ENCODE measurements at regions of chr12 and their contacts with region 1.

Region 1: DNA sequence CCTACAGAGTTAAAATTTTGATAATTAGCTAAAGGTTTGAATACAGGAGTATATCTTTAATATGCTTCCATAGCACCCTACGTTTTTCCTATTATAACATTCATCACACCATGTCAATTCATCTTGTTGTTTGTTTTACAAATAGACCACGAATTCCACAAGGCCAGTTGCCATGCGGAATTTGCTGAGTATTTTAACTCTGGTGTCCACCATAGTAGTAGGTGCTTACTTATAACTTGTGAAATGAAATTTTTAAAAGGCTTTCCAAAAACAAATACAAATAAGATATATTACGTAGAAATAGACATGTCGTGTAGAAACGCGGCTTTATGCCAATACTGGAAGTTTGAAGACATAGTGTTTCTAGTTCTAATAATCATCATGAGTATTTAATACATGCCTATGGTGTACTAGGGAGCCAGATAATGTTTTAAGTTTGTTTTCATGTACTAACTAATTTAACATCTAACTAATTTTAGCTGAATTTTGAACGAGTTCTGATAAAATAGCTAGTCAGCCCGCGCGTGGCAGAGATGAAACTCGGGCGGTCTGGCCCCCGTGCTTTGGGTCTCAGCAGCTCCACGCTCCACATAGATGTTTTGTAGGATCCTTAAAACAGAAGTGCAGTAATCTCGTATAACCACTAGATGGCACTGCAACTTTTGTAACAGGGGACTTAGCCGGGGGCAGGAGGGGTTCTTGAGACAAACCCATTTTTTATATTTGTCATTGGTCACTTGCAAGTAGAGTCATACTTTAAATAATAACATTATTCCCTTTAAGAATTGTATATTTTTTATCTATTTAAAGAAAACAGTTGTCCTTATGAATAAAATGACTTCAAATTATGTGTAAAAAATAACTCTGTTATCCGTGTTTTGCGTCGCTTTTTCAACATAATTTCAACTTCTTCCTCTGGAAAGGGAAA is 10.2 kb downstream of the CD69 start:
- DNase-seq: no peak
- ATAC-seq: peak; percentile 90
- H3K4me3 ChIP-seq: peak overlapping the region in 1 of 2 experiments; percentile 24; a peak in 1 of 4 replicates
- H3K27ac ChIP-seq: no peak overlapping the region
- H3K4me1 ChIP-seq: no peaks in the 10 kb centered on the region; the same call in 1 of the 2 replicates
- H3K27me3 ChIP-seq: no peaks in the 10 kb centered on the region
- CTCF ChIP-seq: peak; percentile 75

Region 2: DNA sequence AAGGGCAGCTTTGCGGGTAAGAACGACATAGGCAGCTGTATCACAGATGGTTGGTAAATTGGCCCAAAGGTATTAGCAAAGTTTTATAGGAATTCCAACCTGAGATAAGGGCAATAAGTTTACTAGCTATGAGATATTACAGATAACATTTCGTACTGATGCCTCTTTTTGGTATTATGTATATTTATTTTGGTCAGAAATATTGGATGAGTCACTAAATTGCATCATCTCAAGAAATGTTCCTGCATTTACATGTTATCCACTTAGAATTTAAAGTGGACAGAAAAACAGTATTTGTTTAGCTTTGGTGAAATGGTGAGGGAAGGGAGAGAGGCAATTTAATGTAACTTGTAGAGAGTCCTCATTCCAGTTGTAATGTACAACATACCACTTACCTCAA is 477.3 kb before region 1 on chr12:
- CTCF ChIA-PET with region 1: no interaction called
- POLR2A ChIA-PET with region 1: no interaction called
- in situ Hi-C with region 1: no loop called
- intact Hi-C with region 1: no loop called
- DNase-seq: no peak
- ATAC-seq: no peak
- H3K4me3 ChIP-seq: no peak overlapping the region
- H3K27ac ChIP-seq: no peak overlapping the region
- H3K4me1 ChIP-seq: no peaks in the 10 kb centered on the region
- H3K27me3 ChIP-seq: no peaks in the 10 kb centered on the region; the same call in 1 of the 2 replicates
- CTCF ChIP-seq: no peak

Region 3: GRCh38 chr12:9642606-9643265 is 107.8 kb before region 1 on chr12:
- CTCF ChIA-PET with region 1: no interaction called
- POLR2A ChIA-PET with region 1: no interaction called
- in situ Hi-C with region 1: no loop called
- intact Hi-C with region 1: no loop called
- DNase-seq: no peak
- ATAC-seq: no peak
- H3K4me3 ChIP-seq: no peak overlapping the region
- H3K27ac ChIP-seq: no peak overlapping the region
- H3K4me1 ChIP-seq: peaks cover 3% of the 10 kb centered on the region; the same call in 1 of the 2 replicates
- H3K27me3 ChIP-seq: no peaks in the 10 kb centered on the region
- CTCF ChIP-seq: no peak

Region 4: DNA sequence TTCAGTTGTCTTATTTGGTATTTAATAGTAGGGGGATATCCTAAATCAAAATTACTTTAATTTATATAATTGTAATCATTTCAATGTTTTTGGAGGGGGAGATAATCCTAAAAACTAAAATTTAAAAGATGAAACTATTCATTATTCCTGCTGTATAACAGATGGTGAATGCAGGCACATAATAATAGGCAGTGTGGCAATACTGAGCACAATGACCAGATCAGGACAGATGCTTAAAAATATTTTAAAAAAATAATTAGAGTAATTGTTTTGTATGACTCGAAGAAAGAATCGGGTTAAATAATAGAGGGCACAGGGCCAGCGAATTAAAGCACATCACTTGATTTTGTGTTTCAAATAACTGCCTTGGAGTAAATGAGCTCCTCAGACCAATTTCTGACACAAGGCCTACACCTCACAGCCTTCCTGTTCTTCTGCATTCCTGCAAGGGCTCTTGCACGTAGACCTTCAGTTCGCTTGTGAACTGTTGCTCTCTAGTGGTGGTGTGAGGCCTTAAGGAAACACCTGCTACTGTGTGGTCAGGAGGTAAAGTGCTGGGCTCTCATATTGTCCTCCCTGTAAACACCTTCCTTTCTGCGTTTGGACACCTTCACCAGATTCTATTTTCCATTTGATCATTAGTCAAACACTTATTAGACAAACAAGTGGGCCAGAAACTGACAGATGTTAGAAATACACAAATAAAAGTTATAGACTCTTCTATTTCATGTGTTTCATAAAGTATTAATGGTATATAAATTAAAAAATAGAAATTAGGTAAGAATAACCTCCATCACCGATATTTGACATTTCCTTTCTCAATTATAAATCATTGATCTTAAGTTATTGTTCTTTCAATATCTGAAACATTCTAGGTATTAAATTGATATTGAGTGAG is 47.4 kb after region 1 on chr12:
- CTCF ChIA-PET with region 1: interaction called, 11 read pairs
- POLR2A ChIA-PET with region 1: no interaction called
- in situ Hi-C with region 1: no loop called
- intact Hi-C with region 1: loop called (anchors 2 kb)
- DNase-seq: peak; percentile 75
- ATAC-seq: peak; percentile 99
- H3K4me3 ChIP-seq: no peak overlapping the region
- H3K27ac ChIP-seq: no peak overlapping the region
- H3K4me1 ChIP-seq: no peaks in the 10 kb centered on the region; the same call in 1 of the 2 replicates
- H3K27me3 ChIP-seq: no peaks in the 10 kb centered on the region
- CTCF ChIP-seq: peak; percentile 74

Region 5: GRCh38 chr12:9925708-9926393 is 175.3 kb after region 1 on chr12:
- CTCF ChIA-PET with region 1: interaction called, 5 read pairs
- POLR2A ChIA-PET with region 1: no interaction called
- in situ Hi-C with region 1: no loop called
- intact Hi-C with region 1: loop called (anchors 5 kb)
- DNase-seq: no peak
- ATAC-seq: peak; percentile 63; the same call in 1 of the 2 replicates
- H3K4me3 ChIP-seq: no peak overlapping the region
- H3K27ac ChIP-seq: no peak overlapping the region
- H3K4me1 ChIP-seq: no peaks in the 10 kb centered on the region
- H3K27me3 ChIP-seq: no peaks in the 10 kb centered on the region
- CTCF ChIP-seq: peak; percentile 64

Region 6: GRCh38 chr12:10016881-10017280 is 266.3 kb after region 1 on chr12:
- CTCF ChIA-PET with region 1: no interaction called
- POLR2A ChIA-PET with region 1: no interaction called
- in situ Hi-C with region 1: no loop called
- intact Hi-C with region 1: loop called (anchors 10 kb)
- DNase-seq: no peak
- ATAC-seq: no peak
- H3K4me3 ChIP-seq: no peak overlapping the region
- H3K27ac ChIP-seq: no peak overlapping the region
- H3K4me1 ChIP-seq: no peaks in the 10 kb centered on the region
- H3K27me3 ChIP-seq: no peaks in the 10 kb centered on the region; the same call in 1 of the 2 replicates
- CTCF ChIP-seq: no peak

Region 7: DNA sequence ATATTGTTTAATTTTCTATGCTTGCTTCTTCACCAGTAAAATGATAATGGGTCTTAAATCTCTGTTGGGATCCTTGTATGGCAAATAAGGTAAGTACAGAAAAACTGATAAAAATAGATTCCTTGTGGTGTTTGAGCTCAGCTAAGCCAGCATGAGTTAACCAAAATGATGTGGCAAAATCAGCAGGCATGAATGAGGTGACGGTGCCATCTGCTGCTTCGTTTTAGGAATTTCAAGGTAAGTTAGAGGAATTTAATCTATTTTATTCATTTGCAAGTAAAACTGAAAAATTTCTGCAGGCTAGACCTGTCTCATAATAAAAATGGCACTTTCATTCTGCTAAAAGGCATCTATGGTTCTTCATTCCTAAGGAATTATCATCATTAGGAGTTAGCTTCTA is 389.5 kb after region 1 on chr12:
- CTCF ChIA-PET with region 1: no interaction called
- POLR2A ChIA-PET with region 1: no interaction called
- in situ Hi-C with region 1: no loop called
- intact Hi-C with region 1: loop called (anchors 2 kb)
- DNase-seq: no peak
- ATAC-seq: no peak
- H3K4me3 ChIP-seq: no peak overlapping the region
- H3K27ac ChIP-seq: no peak overlapping the region
- H3K4me1 ChIP-seq: no peaks in the 10 kb centered on the region; the same call in 1 of the 2 replicates
- H3K27me3 ChIP-seq: no peaks in the 10 kb centered on the region
- CTCF ChIP-seq: peak; percentile 52; the same call in 1 of the 2 replicates